ENCODE measurements at regions of chr7 and their contacts with region 1.

Region 1: DNA sequence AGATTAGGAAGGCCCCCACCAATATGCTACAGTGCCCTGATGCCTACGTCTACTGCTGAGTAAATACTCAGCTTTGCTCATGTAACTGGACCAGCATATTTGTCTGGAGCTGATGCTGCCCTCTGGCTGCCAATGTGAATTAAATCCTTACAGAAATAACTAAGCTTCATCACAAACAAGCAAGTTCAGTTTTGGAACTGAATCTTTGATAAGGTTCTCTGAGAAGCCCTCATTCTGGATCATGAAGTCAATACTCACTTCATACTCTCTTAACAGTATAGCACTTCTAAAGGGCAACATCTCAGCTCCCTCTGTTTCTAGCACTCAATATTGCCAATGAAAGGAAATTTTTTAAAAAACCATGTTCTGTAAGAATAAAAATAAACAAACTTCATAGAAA is 246.7 kb downstream of the ETV1 start:
- DNase-seq: peak; percentile 41
- H3K4me3 ChIP-seq: no peak overlapping the region
- H3K27ac ChIP-seq: no peak overlapping the region; a peak in 1 of 4 replicates
- H3K4me1 ChIP-seq: peaks cover 3 to 7% of the 10 kb centered on the region in 2 experiments; a peak in 3 of 4 replicates
- H3K27me3 ChIP-seq: no peaks in the 10 kb centered on the region
- CTCF ChIP-seq: peak; percentile 74
- EP300 ChIP-seq: no peak
- RAD21 ChIP-seq: peak; percentile 74

Region 2: DNA sequence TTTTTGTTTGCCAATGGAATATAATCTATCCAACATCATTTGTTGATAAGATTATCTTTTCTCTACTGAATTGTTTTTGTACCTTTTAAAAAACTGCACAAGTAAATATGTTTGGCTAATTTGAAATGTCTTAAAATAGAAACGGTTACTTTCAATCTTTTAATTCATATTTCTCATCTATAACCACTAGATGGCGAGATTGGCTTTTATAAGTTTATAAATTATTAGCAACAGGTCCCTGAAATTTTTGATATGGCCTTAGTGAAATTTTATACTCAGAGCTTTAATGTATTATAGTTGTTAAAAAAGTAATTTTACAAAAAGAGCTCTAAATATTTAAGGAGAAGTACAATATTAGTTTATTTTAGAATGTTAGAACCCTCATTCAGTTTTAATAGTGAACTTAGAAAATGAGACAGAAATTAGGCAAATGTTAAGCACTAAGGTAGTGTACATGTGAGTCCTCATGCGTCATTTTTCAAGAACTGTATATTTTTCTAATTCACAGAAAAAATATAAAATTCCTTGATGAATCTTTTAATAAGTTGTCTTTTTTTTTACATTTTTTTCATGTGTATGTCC is 462.9 kb before region 1 on chr7:
- CTCF ChIA-PET with region 1: interaction called, 22 read pairs
- POLR2A ChIA-PET with region 1: no interaction called
- DNase-seq: peak; percentile 23
- H3K4me3 ChIP-seq: no peak overlapping the region
- H3K27ac ChIP-seq: no peak overlapping the region
- H3K4me1 ChIP-seq: no peaks in the 10 kb centered on the region
- H3K27me3 ChIP-seq: no peaks in the 10 kb centered on the region; the same call in 1 of the 2 replicates
- CTCF ChIP-seq: peak; percentile 79
- EP300 ChIP-seq: no peak
- RAD21 ChIP-seq: peak; percentile 73

Region 3: GRCh38 chr7:13524076-13524475 is 218.7 kb before region 1 on chr7:
- CTCF ChIA-PET with region 1: interaction called, 18 read pairs
- POLR2A ChIA-PET with region 1: no interaction called
- DNase-seq: no peak
- H3K4me3 ChIP-seq: no peak overlapping the region
- H3K27ac ChIP-seq: no peak overlapping the region
- H3K4me1 ChIP-seq: peaks cover 0 to 2% of the 10 kb centered on the region in 2 experiments; a peak in 1 of 4 replicates
- H3K27me3 ChIP-seq: no peaks in the 10 kb centered on the region
- CTCF ChIP-seq: no peak
- EP300 ChIP-seq: no peak
- RAD21 ChIP-seq: no peak

Region 4: DNA sequence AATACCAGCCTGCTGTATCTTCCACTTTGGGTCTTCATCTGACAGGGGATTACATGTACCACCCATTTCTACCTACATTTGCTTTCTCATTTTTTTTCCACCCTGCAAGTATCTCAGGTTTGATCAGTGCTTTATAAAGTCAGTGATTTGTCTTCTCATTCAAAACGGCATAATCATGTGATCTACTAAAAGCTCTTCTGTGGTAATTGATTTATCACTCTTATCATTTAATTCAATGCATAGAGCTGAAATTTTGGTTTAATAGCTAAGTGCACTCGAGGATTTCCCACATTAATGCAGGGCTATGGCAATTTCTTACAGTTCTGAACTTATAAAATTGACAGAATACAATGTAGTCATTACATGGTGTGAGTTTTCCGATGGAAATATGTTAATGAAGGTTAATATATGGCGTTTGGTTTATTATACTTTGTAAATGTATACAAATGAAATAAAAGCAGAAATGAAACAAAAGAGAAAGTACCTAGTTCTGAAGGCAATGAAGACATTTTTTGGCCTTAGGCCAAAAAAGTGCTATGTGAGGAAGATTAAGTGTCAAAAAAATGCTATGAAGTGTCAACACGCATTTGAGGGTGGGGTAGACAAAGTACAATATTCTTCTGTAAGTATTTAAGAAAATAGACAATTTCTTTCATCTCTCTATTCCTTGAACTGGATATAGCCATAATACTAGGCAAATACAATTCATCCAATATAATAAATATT is 210.6 kb before region 1 on chr7:
- CTCF ChIA-PET with region 1: interaction called, 11 read pairs
- POLR2A ChIA-PET with region 1: no interaction called
- DNase-seq: peak; percentile 1
- H3K4me3 ChIP-seq: no peak overlapping the region
- H3K27ac ChIP-seq: no peak overlapping the region
- H3K4me1 ChIP-seq: peaks cover 0 to 6% of the 10 kb centered on the region in 2 experiments; a peak in 1 of 4 replicates
- H3K27me3 ChIP-seq: no peaks in the 10 kb centered on the region
- CTCF ChIP-seq: no peak
- EP300 ChIP-seq: peak in 1 of 2 experiments; percentile 13; a peak in 1 of 4 replicates
- RAD21 ChIP-seq: no peak

Region 5: GRCh38 chr7:13727279-13728150 is 15.3 kb before region 1 on chr7:
- CTCF ChIA-PET with region 1: interaction called, 20 read pairs
- POLR2A ChIA-PET with region 1: no interaction called
- DNase-seq: no peak
- H3K4me3 ChIP-seq: no peak overlapping the region
- H3K27ac ChIP-seq: no peak overlapping the region
- H3K4me1 ChIP-seq: no peaks in the 10 kb centered on the region
- H3K27me3 ChIP-seq: no peaks in the 10 kb centered on the region
- CTCF ChIP-seq: no peak
- EP300 ChIP-seq: no peak
- RAD21 ChIP-seq: no peak